ENCODE measurements at regions of chr3 and their contacts with region 1.

Region 1: DNA sequence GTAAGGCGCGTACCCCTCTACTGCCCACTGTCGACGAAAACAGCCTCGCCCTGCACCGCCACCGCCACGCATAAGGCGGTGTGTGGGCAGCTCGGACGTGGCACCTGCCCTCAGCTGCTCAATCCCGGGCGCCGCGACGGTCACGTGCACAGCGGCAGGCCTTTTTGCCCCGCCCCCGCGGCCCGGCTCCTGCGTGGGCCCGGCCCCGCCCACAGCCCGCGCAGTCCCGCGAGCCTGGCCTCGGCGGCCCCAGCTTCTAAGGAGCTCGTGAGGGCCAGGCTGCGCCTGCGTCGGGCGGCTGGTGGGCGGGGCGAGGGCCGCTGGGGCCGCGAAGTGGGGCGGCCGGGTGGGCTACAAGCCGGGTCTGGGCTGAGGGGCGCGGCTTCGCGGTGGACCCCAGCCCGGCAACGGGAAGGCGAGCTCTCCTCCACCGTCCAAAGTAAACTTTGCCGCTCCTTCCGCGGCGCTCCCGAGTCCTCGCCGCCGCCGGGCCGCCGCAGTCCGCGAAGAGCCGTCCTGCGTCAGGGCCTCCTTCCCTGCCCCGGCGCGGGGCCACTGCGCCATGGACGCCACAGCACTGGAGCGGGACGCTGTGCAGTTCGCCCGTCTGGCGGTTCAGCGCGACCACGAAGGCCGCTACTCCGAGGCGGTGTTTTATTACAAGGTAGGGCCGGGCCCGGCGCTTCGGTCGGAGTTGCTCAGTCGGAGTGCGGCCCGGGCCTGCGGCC is at the start of gene CAPN7:
- DNase-seq: peak; percentile 96 to 98
- ATAC-seq: peak; percentile 99
- H3K4me3 ChIP-seq: peak within 1 kb of the TSS; percentile 95 to 97
- H3K27ac ChIP-seq: peak within 1 kb of the TSS; percentile 49 to 91
- H3K4me1 ChIP-seq: no peaks in the 10 kb centered on the region
- H3K27me3 ChIP-seq: no peaks in the 10 kb centered on the region
- total RNA-seq, gene CAPN7: 48.2 to 54.4 TPM

Region 2: GRCh38 chr3:14947886-14948555 is 258.1 kb before region 1 on chr3:
- intact Hi-C with region 1: loop called in 1 of 2 experiments (anchors 10 kb)
- DNase-seq: peak; percentile 98 to 99
- ATAC-seq: peak; percentile 99
- H3K4me3 ChIP-seq: peak overlapping the region; percentile 93 to 97
- H3K27ac ChIP-seq: peak overlapping the region; percentile 85 to 99
- H3K4me1 ChIP-seq: peaks cover 0 to 9% of the 10 kb centered on the region in 2 donors
- H3K27me3 ChIP-seq: no peaks in the 10 kb centered on the region

Region 3: GRCh38 chr3:15098503-15099363 is 107.4 kb before region 1 on chr3 and contains the start of gene RBSN:
- intact Hi-C with region 1: loop called in 1 of 2 experiments (anchors 5 kb)
- DNase-seq: peak; percentile 98 to 99
- ATAC-seq: peak; percentile 96
- H3K4me3 ChIP-seq: peak within 1 kb of the TSS; percentile 74 to 85
- H3K27ac ChIP-seq: peak within 1 kb of the TSS; percentile 14 to 94
- H3K4me1 ChIP-seq: peaks cover 0 to 6% of the 10 kb centered on the region in 2 donors
- H3K27me3 ChIP-seq: no peaks in the 10 kb centered on the region
- total RNA-seq, gene RBSN: 32.4 to 39.2 TPM

Region 4: DNA sequence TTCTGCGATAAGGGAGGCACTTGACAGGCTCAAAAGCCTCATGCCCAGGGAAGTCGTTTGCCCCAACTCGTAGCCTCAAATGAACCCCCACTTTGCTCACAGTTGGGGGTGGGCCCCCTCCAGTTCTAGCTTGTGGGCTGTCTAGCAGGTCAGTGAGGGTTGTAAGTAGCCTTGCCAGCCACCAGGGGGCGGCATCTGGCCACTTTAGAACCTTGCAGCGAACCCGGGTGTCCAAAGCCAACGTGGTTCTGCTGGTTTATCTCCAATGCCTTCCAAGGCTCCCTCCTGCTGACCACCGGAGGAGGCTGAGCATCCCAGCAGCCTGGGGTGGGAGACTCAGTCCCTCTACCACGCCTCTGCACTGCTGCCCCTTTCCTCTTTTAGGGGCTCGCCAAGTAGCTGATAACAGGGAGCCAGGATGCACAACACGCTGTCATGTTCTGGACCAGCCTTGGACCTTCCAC is 98.0 kb before region 1 on chr3:
- intact Hi-C with region 1: loop called (anchors 5 kb)
- DNase-seq: peak; percentile 82 to 92
- ATAC-seq: peak; percentile 88
- H3K4me3 ChIP-seq: no peak overlapping the region
- H3K27ac ChIP-seq: no peak overlapping the region
- H3K4me1 ChIP-seq: no peaks in the 10 kb centered on the region
- H3K27me3 ChIP-seq: no peaks in the 10 kb centered on the region

Region 5: GRCh38 chr3:15148614-15149013 is 57.5 kb before region 1 on chr3:
- intact Hi-C with region 1: no loop called
- DNase-seq: no peak
- ATAC-seq: no peak
- H3K4me3 ChIP-seq: no peak overlapping the region
- H3K27ac ChIP-seq: no peak overlapping the region
- H3K4me1 ChIP-seq: no peaks in the 10 kb centered on the region
- H3K27me3 ChIP-seq: no peaks in the 10 kb centered on the region

Region 6: GRCh38 chr3:15159501-15160136 is 46.5 kb before region 1 on chr3:
- intact Hi-C with region 1: no loop called
- DNase-seq: no peak
- ATAC-seq: no peak
- H3K4me3 ChIP-seq: no peak overlapping the region
- H3K27ac ChIP-seq: no peak overlapping the region
- H3K4me1 ChIP-seq: no peaks in the 10 kb centered on the region
- H3K27me3 ChIP-seq: peaks cover 0 to 2% of the 10 kb centered on the region in 2 donors

Region 7: DNA sequence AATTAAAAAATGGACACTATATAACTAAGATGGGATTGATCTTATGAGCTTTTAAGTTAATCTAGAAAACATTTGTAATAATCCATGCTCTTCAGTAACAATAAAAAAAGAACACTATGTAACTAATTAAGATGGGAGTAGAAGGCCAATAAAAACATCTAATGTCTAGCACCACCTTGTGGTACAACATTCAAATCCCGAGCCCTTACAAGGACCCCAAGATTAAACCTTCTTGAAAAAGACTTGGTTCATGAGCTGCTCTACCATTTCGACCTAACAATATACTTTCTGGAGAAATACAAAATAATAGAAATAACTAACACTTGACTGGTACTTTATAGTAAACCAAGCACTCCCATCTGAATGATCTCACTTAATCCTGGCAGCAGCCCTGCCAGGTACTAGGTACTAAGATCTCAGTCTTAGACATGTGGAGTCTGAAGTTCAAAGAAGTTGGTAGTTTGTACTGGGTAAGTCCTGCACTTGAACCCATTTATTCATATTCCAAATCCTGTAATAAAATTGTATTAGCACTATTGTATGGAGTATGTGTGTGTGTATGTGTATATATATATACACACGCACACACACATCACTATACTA is 199.5 kb after region 1 on chr3:
- intact Hi-C with region 1: loop called (anchors 2 to 5 kb)
- DNase-seq: no peak
- ATAC-seq: peak; percentile 63
- H3K4me3 ChIP-seq: no peak overlapping the region
- H3K27ac ChIP-seq: no peak overlapping the region
- H3K4me1 ChIP-seq: no peaks in the 10 kb centered on the region
- H3K27me3 ChIP-seq: no peaks in the 10 kb centered on the region

Region 8: GRCh38 chr3:15557511-15557946 is 351.4 kb after region 1 on chr3:
- intact Hi-C with region 1: loop called (anchors 5 to 10 kb)
- DNase-seq: no peak
- ATAC-seq: peak; percentile 82
- H3K4me3 ChIP-seq: no peak overlapping the region
- H3K27ac ChIP-seq: no peak overlapping the region
- H3K4me1 ChIP-seq: no peaks in the 10 kb centered on the region
- H3K27me3 ChIP-seq: no peaks in the 10 kb centered on the region

Region 9: DNA sequence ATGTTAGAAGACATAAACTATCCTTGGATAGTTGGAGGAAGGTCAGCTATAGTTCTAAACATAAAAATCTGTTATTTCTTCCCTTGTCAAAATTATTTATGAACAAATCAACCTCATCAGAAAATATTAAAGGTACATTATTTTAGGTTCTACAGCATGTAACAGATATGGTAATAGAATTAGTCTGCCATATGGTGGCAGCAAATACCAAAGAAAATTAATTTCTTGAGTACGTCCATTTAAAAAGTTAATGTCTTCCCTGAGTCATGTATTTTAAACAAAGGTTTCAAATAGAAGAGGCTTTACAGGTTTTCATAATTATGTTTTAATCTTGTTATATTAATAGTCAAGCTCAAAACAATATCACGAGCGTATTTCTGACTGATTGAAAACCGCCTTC is 609.6 kb after region 1 on chr3:
- intact Hi-C with region 1: loop called in 1 of 2 experiments (anchors 5 kb)
- DNase-seq: no peak
- ATAC-seq: no peak
- H3K4me3 ChIP-seq: no peak overlapping the region
- H3K27ac ChIP-seq: no peak overlapping the region
- H3K4me1 ChIP-seq: no peaks in the 10 kb centered on the region
- H3K27me3 ChIP-seq: no peaks in the 10 kb centered on the region

Measured in aorta (tissue), 5 donors.